ENCODE measurements at regions of chr11 and their contacts with region 1.

Region 1: DNA sequence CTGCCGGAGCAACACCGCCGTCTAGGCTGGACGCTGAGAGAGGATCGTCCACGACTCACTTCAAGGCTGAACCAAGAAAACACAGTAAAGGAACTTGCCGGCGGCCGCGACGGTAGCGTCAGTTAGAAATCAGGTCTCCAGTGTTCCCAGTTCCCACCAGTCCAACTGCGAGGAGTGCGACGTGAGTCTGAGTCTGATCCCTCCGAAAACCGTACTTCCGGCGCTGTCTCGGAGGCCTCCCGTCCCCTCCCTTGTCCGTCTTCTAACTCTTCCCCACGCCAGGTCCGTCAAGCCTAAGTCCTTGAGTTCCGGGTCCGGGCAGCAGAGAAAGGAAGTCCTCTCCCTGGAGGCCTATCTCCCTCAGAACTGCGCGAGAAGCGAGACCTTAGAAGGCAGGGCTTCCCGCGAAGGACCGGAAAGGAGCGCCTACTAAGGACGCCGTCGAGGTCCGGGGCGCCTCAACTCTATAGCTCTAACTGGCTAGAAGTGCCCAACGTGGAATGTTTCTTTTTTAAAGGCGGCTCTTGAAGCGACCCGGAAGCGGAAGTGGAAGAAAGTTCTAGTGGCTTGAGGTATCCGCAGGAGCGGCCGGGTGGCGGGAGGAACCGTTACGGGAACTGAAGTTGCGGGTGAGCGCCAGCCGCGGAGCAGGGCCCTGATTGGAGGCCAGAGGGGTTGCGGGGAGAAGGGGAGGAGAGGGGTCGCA is at the starts of genes BANF1 and EIF1AD:
- DNase-seq: peak; percentile 93
- H3K4me3 Mint-ChIP-seq: peak within 1 kb of the TSS; percentile 99
- H3K27ac Mint-ChIP-seq: peak within 1 kb of the TSS; percentile 99
- H3K4me1 Mint-ChIP-seq: peaks cover 26% of the 10 kb centered on the region
- H3K27me3 Mint-ChIP-seq: no peaks in the 10 kb centered on the region
- total RNA-seq, gene BANF1: 282 and 284 TPM in 2 replicates
- total RNA-seq, gene EIF1AD: 69.0 and 70.7 TPM in 2 replicates

Region 2: GRCh38 chr11:65569973-65570918 is 431.8 kb before region 1 on chr11 and contains the start of gene ZNRD2:
- intact Hi-C with region 1: loop called (anchors 1 kb)
- DNase-seq: peak; percentile 99
- H3K4me3 Mint-ChIP-seq: peak within 1 kb of the TSS; percentile 99
- H3K27ac Mint-ChIP-seq: peak within 1 kb of the TSS; percentile 98
- H3K4me1 Mint-ChIP-seq: peaks cover 64% of the 10 kb centered on the region
- H3K27me3 Mint-ChIP-seq: no peaks in the 10 kb centered on the region
- total RNA-seq, gene ZNRD2: 94.6 and 96.9 TPM in 2 replicates

Region 3: DNA sequence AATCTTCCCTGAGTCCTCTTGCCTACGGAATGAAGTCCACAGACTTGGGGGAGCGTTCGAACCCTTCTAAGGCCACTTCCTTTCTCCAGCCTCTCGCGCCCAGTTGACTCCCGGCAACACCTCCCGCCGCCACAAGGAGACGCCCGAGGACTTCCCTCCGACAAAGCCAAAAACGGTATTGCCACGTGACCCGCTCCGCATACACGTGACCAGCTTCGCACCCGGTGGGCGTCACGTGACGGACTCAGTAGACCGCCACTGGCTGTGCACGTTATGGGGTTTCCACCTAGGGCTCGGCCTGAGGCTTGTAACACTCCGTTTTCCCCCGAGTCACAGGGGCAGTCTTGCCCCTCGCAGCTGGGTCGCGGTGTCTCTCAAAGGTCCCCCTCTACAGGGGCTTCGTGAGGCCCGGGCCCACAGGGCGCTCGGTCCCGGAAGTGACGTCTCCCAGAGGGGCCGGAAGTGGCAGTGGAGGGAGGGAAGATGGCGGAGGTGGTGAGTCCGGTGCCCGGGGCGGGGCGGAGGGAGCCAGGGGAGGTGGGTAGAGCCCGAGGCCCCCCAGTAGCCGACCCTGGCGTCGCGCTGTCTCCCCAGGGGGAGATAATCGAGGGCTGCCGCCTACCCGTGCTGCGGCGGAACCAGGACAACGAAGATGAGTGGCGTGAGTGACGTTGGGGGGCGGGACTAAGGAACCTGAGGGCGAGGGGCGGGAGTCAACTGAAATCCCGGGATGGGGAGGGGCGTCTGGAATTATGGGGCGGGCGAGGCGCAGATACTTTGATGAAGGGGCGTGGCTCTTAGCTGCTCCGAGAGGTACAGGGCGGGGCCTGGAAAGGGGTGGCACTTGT is 290.1 kb before region 1 on chr11 and contains the start of gene KAT5:
- intact Hi-C with region 1: loop called (anchors 5 kb)
- DNase-seq: peak; percentile 98
- H3K4me3 Mint-ChIP-seq: peak within 1 kb of the TSS; percentile 96
- H3K27ac Mint-ChIP-seq: peak within 1 kb of the TSS; percentile 98
- H3K4me1 Mint-ChIP-seq: peaks cover 29% of the 10 kb centered on the region
- H3K27me3 Mint-ChIP-seq: no peaks in the 10 kb centered on the region
- total RNA-seq, gene KAT5: 68.1 and 75.0 TPM in 2 replicates

Region 4: GRCh38 chr11:65873318-65874156 is 128.6 kb before region 1 on chr11:
- intact Hi-C with region 1: loop called (anchors 1 kb)
- DNase-seq: peak; percentile 97
- H3K4me3 Mint-ChIP-seq: peak overlapping the region; percentile 90
- H3K27ac Mint-ChIP-seq: peak overlapping the region; percentile 72
- H3K4me1 Mint-ChIP-seq: peaks cover 16% of the 10 kb centered on the region
- H3K27me3 Mint-ChIP-seq: peaks cover 1% of the 10 kb centered on the region

Region 5: DNA sequence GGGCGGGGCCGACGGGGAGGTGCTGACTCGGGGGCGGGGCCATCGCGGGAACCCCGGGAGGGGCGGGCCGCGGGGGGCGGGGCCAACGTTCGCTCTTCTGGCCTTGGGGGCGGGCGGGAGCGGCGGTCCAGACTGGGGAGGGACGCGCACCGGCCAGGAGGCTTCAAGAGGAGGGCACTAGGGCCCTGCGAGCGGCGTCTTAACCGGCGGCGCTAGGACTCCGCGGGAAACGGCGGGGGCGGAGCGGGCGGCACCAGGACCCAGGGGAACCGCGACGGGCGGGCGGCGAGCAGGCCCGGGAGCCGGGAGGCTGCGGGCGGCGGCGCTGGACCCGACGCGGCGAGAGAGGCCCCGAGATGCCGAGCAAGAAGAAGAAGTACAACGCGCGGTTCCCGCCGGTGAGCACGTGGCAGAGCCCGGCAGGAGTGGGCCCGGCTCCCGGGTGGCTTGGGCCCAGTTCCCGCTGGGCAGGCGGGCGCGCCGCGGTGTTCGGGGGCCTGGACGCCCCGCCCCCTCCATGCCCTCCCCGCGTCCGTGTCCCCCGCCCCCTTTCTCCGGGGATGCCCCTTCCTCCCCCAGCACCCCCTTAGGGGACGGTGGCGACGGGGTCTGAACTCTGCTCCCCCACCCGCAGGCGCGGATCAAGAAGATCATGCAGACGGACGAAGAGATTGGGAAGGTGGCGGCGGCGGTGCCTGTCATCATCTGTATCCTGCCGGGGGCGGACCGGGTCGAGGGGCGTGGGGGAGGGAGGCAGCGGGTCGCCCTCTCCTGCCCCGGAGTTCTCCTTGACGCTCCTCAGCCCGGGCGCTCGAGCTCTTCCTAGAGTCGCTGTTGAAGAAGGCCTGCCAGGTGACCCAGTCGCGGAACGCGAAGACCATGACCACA is 82.7 kb before region 1 on chr11 and contains the start of gene DRAP1:
- intact Hi-C with region 1: loop called (anchors 1 kb)
- DNase-seq: peak; percentile 97
- H3K4me3 Mint-ChIP-seq: peak within 1 kb of the TSS; percentile 94
- H3K27ac Mint-ChIP-seq: peak within 1 kb of the TSS; percentile 84
- H3K4me1 Mint-ChIP-seq: peaks cover 17% of the 10 kb centered on the region
- H3K27me3 Mint-ChIP-seq: no peaks in the 10 kb centered on the region
- total RNA-seq, gene DRAP1: 119 and 129 TPM in 2 replicates

Region 6: DNA sequence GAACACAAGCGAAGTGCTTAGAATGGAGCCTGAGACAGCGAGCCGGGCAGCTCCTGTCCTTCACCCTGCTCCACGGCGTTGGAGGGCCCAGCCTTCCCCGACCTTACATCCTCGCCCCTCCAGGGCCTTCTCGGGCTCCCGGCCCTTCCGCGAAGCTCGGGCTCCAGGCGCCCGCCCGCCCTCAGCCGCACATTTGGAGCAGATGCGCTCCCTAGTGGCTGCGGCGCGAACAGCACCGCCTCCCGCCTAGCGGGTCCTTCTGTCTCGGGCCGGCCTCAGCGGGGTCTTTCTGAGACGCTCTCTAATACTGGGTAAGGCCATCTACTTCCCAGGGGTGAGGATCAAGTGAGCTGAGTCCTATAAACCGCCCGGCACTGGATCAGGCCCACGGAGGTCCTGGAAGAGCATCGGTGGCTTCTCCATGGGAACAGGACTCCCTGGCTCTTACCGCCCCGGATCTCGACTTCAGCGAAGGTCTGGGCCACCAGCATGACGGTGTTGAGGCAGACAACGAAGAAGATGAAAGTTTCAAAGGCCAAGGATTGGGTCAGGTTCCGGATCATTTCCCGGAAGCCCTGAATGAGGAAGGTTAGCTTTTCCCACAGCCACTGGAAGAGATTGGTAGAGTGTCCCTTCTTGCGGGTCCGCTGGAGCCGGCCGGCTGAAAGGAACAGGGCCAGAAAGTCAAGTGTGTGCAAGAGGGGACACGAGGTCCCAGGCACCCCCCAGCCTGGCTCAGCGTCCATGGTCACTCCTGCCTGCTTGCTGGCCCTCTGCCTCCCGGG is 20.5 kb after region 1 on chr11:
- intact Hi-C with region 1: loop called (anchors 1 kb)
- DNase-seq: peak; percentile 73
- H3K4me3 Mint-ChIP-seq: peak overlapping the region; percentile 12
- H3K27ac Mint-ChIP-seq: no peak overlapping the region
- H3K4me1 Mint-ChIP-seq: peaks cover 8% of the 10 kb centered on the region
- H3K27me3 Mint-ChIP-seq: peaks cover 8% of the 10 kb centered on the region

Region 7: GRCh38 chr11:66136752-66137123 is 134.6 kb after region 1 on chr11:
- intact Hi-C with region 1: loop called (anchors 5 kb)
- DNase-seq: no peak
- H3K4me3 Mint-ChIP-seq: no peak overlapping the region
- H3K27ac Mint-ChIP-seq: peak overlapping the region; percentile 52
- H3K4me1 Mint-ChIP-seq: peaks cover 28% of the 10 kb centered on the region
- H3K27me3 Mint-ChIP-seq: no peaks in the 10 kb centered on the region

Measured in activated T-helper 1 cell treated with anti-CD3 and anti-CD28 coated beads, Interleukin-12 subunit alpha, Interleukin-12 subunit beta, Interleukin-2, Interleukin-4 antibody, amounts not matched to agents 30 ng/mL and 10 ng/mL and 1 ng/mL, durations not matched to agents 14 hours and 24 hours and 36 hours (primary cell).